ENCODE measurements at regions of chr9 and their contacts with region 1.

Region 1: DNA sequence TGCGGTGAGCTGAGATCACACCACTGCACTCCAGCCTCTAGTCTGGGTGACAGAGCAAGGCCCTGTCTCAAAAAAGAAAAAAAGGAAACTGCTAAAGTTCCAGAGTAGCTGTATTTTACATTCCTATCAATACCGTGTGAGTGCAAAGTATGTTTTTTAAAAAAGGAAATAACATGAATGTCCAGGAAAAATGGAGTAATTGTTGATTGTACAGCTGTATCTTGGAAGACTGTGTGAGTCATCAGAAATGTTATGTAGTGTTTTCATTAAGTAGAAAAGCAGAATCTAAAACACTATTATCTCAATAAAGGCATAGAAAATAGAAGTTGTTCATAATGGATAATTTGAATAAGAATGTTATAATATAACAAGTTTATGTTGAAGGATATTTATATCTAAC is 53.9 kb downstream of the ZCCHC7 start:
- DNase-seq: no peak
- ATAC-seq: no peak
- H3K4me3 ChIP-seq: no peak overlapping the region
- H3K27ac ChIP-seq: no peak overlapping the region
- H3K4me1 ChIP-seq: no peaks in the 10 kb centered on the region
- H3K27me3 ChIP-seq: no peaks in the 10 kb centered on the region

Region 2: DNA sequence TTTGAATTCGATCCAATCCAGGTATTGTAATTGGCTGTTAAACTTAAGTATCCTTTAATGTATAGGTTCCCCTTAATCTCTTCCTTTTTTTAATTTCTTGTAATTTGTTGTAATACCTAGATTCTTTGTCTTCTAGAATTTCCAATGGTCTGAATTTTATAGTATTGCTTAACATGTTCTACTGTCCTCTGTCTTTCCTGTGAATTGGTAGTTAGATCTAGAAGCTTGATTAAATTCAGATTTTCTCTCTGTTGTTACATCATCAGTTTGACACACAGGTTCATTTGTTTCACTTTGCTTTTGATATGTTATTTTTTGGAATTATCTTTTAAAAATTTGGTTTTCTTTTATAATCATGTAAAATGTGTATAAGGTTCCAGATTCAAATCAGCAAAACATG is 40.1 kb before region 1 on chr9:
- intact Hi-C with region 1: no loop called
- DNase-seq: no peak
- ATAC-seq: no peak
- H3K4me3 ChIP-seq: no peak overlapping the region
- H3K27ac ChIP-seq: no peak overlapping the region
- H3K4me1 ChIP-seq: no peaks in the 10 kb centered on the region
- H3K27me3 ChIP-seq: no peaks in the 10 kb centered on the region

Region 3: DNA sequence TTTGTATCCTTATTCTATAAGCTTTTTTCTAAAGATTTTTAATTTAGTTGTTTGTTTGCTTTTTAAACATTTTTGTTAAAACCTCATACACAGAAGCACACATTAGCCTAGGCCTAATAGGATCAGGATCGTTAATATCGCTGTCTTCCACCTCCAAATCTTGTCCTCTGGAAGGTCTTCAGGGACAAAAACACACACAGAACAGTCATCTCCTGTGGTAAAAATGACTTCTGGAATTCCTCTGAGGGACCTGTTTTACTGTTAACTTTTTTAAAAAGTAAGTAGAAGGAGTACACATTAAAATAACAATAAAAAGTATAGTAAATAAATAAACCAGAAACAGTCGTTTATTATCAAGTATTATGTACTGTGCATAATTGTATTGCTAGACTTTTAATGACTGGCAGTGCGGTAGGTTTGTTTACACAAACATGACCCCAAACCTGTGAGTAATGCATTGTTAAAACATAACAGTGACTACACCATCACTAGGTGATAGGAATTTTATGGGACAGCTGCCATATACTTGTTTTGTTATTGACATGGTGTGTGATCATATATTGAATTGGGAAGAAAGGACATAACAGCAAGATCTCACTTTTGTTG is 55.7 kb after region 1 on chr9:
- intact Hi-C with region 1: loop called in 1 of 2 experiments (anchors 10 kb)
- DNase-seq: no peak
- ATAC-seq: no peak
- H3K4me3 ChIP-seq: no peak overlapping the region
- H3K27ac ChIP-seq: no peak overlapping the region
- H3K4me1 ChIP-seq: no peaks in the 10 kb centered on the region
- H3K27me3 ChIP-seq: no peaks in the 10 kb centered on the region

Measured in aorta (tissue), 5 donors.